ENCODE measurements at regions of chr19 and their contacts with region 1.

Region 1: GRCh38 chr19:55516878-55517620 is 19.9 kb downstream of the SBK2 start:
- DNase-seq: peak; percentile 94
- H3K4me3 ChIP-seq: peak overlapping the region; percentile 26 to 43
- H3K27ac ChIP-seq: peak overlapping the region; percentile 77
- H3K4me1 ChIP-seq: no peaks in the 10 kb centered on the region
- H3K27me3 ChIP-seq: no peaks in the 10 kb centered on the region
- CTCF ChIP-seq: peak; percentile 79 to 98 (median 92)
- POLR2A ChIP-seq: peak; percentile 55

Region 2: GRCh38 chr19:54159352-54160181 is 1357.5 kb before region 1 on chr19 and contains the start of gene LENG1:
- intact Hi-C with region 1: no loop called
- DNase-seq: peak; percentile 100
- H3K4me3 ChIP-seq: peak within 1 kb of the TSS; percentile 71 to 89
- H3K27ac ChIP-seq: peak within 1 kb of the TSS; percentile 88 to 95
- H3K4me1 ChIP-seq: peaks cover 26% of the 10 kb centered on the region
- H3K27me3 ChIP-seq: no peaks in the 10 kb centered on the region
- CTCF ChIP-seq: peak; percentile 3 to 75 (median 56)
- POLR2A ChIP-seq: peak; percentile 55
- total RNA-seq, gene LENG1: 7.6 to 14.7 TPM

Region 3: DNA sequence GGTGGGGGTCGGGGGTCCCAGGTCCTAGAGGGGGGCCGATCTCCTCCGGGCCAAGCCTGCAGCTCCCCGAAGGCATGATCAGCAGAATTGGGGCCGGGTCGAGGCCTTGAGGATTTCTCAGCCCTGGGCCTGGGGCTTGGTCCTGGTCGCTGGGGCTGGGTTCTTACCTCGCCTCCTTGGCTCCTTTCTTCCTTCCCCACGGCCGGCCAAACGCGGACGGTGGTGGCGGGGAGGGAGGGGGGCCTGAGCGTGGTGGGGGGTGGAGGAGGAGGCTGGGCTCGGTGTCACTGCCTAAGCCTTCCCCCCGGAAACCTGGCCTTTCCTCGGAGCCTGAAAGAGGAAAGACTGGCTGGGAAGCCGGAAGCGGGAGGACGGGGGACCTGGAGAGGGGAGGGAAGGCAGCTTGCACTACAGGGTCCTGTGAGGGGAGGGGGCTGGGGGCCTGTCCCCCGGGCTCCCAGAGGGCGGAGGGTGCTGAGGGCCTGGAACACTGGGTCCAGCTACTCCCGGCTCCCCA is 63.6 kb after region 1 on chr19 and contains the start of gene ZNF579:
- intact Hi-C with region 1: loop called (anchors 5 kb)
- DNase-seq: peak; percentile 76
- H3K4me3 ChIP-seq: peak within 1 kb of the TSS; percentile 86 to 97
- H3K27ac ChIP-seq: peak within 1 kb of the TSS; percentile 88 to 94
- H3K4me1 ChIP-seq: peaks cover 14% of the 10 kb centered on the region
- H3K27me3 ChIP-seq: no peaks in the 10 kb centered on the region
- CTCF ChIP-seq: no peak
- POLR2A ChIP-seq: no peak
- total RNA-seq, gene ZNF579: 8.7 to 10.8 TPM

Region 4: DNA sequence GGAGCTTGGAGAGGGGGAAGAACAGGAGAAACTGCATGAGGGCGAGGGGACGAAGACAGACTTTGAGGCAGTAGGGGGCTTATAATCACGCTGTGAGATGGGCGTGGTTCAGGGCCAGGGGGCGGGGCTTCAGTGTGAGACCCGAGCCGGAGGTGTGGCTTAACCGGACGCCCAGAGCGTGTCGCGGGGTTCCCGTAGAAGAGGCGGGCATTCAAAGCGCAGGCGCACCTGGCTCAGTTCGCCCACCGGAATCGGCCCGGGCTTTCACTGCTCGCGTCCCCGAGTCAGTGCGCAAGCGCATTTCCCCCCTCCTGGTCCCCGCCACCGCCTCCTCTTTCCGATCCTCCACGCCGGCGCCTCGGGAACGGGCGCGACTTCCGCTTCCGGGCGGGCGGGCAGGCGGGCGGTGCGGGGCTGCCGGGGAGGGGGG is 88.2 kb after region 1 on chr19:
- intact Hi-C with region 1: loop called (anchors 5 kb)
- DNase-seq: peak; percentile 97
- H3K4me3 ChIP-seq: peak overlapping the region; percentile 84 to 99
- H3K27ac ChIP-seq: peak overlapping the region; percentile 85 to 95
- H3K4me1 ChIP-seq: peaks cover 10% of the 10 kb centered on the region
- H3K27me3 ChIP-seq: no peaks in the 10 kb centered on the region
- CTCF ChIP-seq: no peak
- POLR2A ChIP-seq: peak; percentile 29

Region 5: GRCh38 chr19:55632463-55632834 is 115.4 kb after region 1 on chr19:
- intact Hi-C with region 1: loop called (anchors 2 kb)
- DNase-seq: peak; percentile 93
- H3K4me3 ChIP-seq: no peak overlapping the region
- H3K27ac ChIP-seq: peak overlapping the region in 1 of 2 donors; percentile 52
- H3K4me1 ChIP-seq: peaks cover 12% of the 10 kb centered on the region
- H3K27me3 ChIP-seq: no peaks in the 10 kb centered on the region
- CTCF ChIP-seq: peak; percentile 79 to 91 (median 89)
- POLR2A ChIP-seq: no peak